ENCODE measurements at regions of chr2 and their contacts with region 1.

Region 1: DNA sequence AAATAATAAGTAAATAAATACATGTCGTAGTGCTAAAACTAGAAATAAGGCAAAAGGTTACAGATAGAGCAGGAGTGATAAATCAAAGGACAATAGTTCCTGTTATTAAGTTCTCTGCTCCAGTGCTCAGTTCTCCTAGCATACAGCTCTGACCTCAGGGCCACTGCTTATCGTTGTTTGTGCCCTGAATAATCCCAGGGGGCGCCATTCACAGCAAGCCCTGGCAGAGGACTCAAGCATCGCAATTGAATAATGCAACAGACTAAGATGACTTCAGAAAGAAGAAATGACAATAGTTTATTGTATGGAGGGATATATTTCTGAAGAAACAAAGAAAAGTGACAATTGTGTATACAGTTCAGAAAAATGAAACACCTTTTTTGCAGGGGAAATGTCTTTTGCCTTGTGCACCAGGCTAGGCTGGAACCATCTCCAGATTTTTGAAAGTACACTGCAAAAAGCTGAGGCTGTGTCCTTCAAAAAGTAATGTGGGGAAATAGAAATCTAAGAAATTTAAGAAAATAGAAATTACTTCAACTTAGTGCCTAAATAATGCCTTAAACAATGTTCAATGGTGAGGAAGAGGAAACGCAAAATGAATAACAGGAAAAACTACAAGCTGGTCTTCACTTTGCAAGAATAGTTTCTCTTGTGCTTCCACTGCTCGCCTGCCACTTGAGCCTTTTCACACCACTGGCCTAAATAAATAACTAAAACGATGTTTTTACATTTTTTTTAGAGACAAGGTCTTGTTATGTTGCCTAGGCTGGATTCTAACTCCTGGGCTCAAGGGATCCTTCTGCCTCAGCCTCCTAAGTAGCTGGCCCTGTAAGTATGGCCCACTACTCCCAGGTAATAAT is 19.0 kb upstream of the CCNYL1 start:
- DNase-seq: peak; percentile 46 to 67 (median 62)
- H3K4me3 ChIP-seq: no peak overlapping the region
- H3K27ac ChIP-seq: no peak overlapping the region
- H3K4me1 ChIP-seq: no peaks in the 10 kb centered on the region
- H3K27me3 ChIP-seq: no peaks in the 10 kb centered on the region

Region 2: GRCh38 chr2:207710814-207711740 is 18.6 kb after region 1 on chr2 and contains the start of gene CCNYL1:
- CTCF ChIA-PET with region 1: interaction called, 16 read pairs
- POLR2A ChIA-PET with region 1: no interaction called
- DNase-seq: peak; percentile 99 to 100 (median 99)
- H3K4me3 ChIP-seq: peak within 1 kb of the TSS; percentile 55 to 98 (median 94)
- H3K27ac ChIP-seq: peak within 1 kb of the TSS; percentile 52 to 88
- H3K4me1 ChIP-seq: peaks cover 0 to 26% (median 19%) of the 10 kb centered on the region in 4 experiments
- H3K27me3 ChIP-seq: no peaks in the 10 kb centered on the region

Region 3: GRCh38 chr2:207734264-207734635 is 41.8 kb after region 1 on chr2:
- CTCF ChIA-PET with region 1: interaction called, 14 read pairs
- POLR2A ChIA-PET with region 1: no interaction called
- DNase-seq: peak; percentile 53 to 75 (median 71)
- H3K4me3 ChIP-seq: no peak overlapping the region
- H3K27ac ChIP-seq: no peak overlapping the region
- H3K4me1 ChIP-seq: no peaks in the 10 kb centered on the region
- H3K27me3 ChIP-seq: no peaks in the 10 kb centered on the region

Region 4: GRCh38 chr2:207792244-207792785 is 99.9 kb after region 1 on chr2:
- CTCF ChIA-PET with region 1: no interaction called
- POLR2A ChIA-PET with region 1: no interaction called
- DNase-seq: peak in 2 of 3 donors; percentile 55 to 66
- H3K4me3 ChIP-seq: peak overlapping the region in 1 of 7 experiments; percentile 16
- H3K27ac ChIP-seq: no peak overlapping the region
- H3K4me1 ChIP-seq: peaks cover 2 to 14% (median 6%) of the 10 kb centered on the region in 4 experiments
- H3K27me3 ChIP-seq: no peaks in the 10 kb centered on the region